PC-3 (cell line): ENCODE measurements at regions of chr2 and their contacts with region 1.

Region 1: DNA sequence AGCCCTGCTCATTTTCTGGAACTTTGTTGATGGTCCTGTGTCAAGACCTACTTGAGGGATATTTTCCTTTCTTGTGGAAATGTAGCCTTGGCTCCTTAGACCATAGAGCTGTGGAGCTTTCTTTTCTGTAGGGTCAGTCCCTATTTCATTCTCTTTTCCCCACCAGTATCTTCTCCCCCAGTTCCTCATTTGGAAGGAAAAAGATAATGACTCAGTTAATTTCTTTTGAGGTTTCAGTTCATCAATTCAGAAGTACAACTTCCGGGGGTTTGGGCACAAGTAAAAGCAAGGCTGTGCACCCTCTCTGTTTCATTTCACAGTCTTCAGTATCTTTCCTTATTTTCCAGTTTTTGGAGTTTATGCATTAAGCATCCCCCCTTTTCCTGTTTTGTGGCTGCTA is 70.7 kb downstream of the CDC42EP3 start:
- DNase-seq: no peak
- ATAC-seq: no peak
- H3K4me3 ChIP-seq: no peak overlapping the region
- H3K27ac ChIP-seq: no peak overlapping the region
- H3K4me1 ChIP-seq: peaks cover 11% of the 10 kb centered on the region
- H3K27me3 ChIP-seq: no peaks in the 10 kb centered on the region
- CTCF ChIP-seq: no peak

Region 2: GRCh38 chr2:37648331-37649011 is 47.7 kb after region 1 on chr2:
- CTCF ChIA-PET with region 1: no interaction called
- POLR2A ChIA-PET with region 1: interaction called, 19 read pairs
- intact Hi-C with region 1: no loop called
- DNase-seq: no peak
- ATAC-seq: no peak
- H3K4me3 ChIP-seq: no peak overlapping the region
- H3K27ac ChIP-seq: no peak overlapping the region
- H3K4me1 ChIP-seq: peaks cover 36% of the 10 kb centered on the region
- H3K27me3 ChIP-seq: no peaks in the 10 kb centered on the region
- CTCF ChIP-seq: no peak

Region 3: DNA sequence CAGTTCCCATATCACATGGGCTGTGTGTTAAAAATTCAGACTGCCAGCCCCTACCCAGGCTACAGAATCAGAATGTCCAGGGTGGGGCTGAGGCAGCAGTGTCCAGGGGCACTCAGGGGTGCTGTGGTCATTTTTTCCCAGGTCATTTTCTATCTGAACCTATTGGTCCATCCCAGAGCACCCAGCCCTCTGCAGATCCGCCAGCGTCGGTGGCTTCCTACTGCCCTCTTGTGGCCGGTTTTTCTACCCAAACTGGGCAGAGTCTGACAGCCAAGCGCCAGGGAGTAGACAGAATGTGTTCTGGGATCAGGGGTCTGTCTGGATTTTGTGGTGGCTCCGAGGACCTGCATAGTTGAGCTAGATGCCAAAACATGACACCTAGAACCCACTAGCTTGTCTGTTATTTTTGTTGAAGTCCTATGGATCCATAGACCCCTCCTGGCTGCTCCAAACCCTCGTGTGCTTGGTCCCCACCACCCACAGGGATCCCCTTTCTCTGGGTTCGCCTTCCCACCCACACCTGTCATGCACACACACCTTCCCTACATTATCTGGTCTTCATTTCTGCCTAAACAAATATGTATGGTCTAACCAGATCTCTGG is 290.3 kb after region 1 on chr2:
- CTCF ChIA-PET with region 1: no interaction called
- POLR2A ChIA-PET with region 1: no interaction called
- intact Hi-C with region 1: no loop called
- DNase-seq: peak; percentile 89
- ATAC-seq: peak; percentile 97
- H3K4me3 ChIP-seq: no peak overlapping the region
- H3K27ac ChIP-seq: no peak overlapping the region
- H3K4me1 ChIP-seq: no peaks in the 10 kb centered on the region
- H3K27me3 ChIP-seq: no peaks in the 10 kb centered on the region
- CTCF ChIP-seq: peak; percentile 87